Posterior vena cava (tissue), 2 donors: ENCODE measurements at regions of chr2 and their contacts with region 1.

Region 1: DNA sequence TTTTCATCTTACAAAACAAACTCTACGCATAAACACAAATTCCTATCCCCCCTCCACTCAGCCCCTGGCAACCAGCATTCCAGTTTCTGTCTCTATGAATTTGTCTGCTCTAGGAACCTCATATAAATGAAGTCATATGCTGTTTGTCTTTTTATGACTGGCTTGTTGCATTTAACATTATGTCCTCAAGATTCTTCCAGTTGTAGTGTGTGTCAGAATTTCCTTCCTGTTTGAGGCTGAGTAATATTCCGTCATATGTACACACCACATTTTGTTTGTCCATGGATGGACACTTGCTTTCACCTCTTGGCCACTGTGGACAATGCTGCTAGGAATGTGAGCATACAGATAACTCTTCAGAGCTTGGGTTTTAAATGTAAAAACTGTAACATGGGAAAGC is 272.1 kb downstream of the GBX2 start:
- DNase-seq: no peak

Region 2: DNA sequence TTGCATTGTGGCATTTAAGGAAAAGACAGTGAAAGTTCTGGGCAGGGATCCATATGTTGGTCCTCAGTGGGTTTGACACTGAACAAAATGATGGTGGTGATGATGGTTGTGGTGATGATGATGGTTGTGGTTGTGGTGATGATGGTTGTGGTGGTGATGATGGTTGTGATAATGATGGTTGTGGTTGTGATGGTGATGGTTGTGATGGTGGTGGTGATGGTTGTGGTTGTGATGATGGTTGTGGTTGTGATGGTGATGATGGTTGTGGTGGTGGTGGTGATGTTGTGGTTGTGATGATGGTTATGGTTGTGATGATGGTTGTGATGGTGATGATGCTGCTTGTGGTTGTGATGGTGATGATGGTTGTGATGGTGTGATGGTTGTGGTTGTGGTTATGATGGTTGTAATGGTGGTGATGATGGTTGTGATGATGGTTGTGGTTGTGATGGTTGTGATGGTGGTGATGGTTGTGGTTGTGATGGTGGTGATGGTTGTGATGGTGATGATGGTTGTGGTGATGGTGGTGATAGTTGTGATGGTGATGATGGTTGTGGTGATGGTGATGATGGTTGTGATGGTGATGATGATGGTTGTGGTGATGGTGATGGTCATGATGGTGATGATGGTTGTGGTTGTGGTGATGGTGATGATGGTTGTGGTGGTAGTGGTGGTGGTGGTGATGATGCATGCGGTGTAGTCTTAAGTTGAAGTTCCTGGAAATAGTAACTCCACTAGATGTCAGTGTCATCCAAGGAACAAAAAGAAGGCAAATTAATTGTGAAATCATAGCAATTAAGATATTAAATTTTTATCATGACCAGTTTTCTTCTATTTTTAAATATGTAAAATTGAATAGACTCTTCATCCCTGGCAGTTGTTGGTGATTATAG is 93.3 kb before region 1 on chr2:
- intact Hi-C with region 1: no loop called
- DNase-seq: no peak

Region 3: GRCh38 chr2:235911633-235912233 is 15.7 kb after region 1 on chr2:
- intact Hi-C with region 1: loop called in 1 of 2 experiments (anchors 1 kb)
- DNase-seq: no peak

Region 4: DNA sequence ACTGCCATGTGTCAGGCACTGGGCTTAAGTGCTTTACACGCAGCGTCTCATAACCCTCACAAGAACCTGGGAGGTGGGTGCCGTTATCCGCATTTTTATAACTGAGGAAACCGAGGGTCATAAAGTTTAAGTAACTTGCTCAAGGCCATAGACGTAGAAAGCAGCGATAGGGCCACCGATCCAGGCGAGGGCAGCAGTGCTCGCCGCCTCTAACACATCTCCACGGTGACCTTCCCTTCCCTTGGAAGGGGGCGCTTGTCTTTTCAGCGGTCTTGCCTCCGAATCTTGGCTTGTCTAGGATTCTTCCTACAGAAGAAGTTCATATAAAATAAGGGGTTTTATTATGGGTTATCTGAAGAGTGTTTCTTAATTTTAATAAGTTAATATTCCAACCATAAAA is 85.6 kb after region 1 on chr2:
- intact Hi-C with region 1: no loop called
- DNase-seq: peak; percentile 50